CD14-positive monocyte (primary cell): ENCODE measurements at regions of chr4 and their contacts with region 1.

Region 1: DNA sequence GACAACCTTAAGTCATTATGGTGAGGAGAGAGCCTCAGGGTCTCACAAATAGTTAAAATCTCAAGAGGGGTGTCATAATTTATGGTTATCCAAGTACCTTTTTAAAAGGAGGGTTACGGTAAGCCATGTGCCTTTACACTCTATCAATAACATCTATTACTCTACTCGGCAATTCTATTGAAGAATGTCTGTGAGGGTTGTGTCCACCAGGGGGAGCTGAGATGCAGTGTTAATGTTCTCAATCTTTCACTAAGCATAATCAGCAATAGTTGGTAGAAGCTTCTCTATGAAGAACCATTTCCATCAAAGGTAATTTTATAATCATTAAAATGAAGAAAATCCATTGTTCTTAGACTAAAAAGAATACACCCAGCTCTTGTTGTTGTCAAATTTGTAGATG is 457.4 kb downstream of the CENPC start:
- DNase-seq: peak in 2 of 3 donors; percentile 5 to 7
- H3K4me3 ChIP-seq: no peak overlapping the region
- H3K4me3 Mint-ChIP-seq: no peak overlapping the region
- H3K27ac ChIP-seq: no peak overlapping the region
- H3K27ac Mint-ChIP-seq: no peak overlapping the region
- H3K4me1 ChIP-seq: no peaks in the 10 kb centered on the region
- H3K4me1 Mint-ChIP-seq: no peaks in the 10 kb centered on the region
- H3K27me3 ChIP-seq: no peaks in the 10 kb centered on the region
- H3K27me3 Mint-ChIP-seq: peaks cover 0 to 2% (median 2%) of the 10 kb centered on the region in 3 donors
- CTCF ChIP-seq: peak; percentile 71

Region 2: DNA sequence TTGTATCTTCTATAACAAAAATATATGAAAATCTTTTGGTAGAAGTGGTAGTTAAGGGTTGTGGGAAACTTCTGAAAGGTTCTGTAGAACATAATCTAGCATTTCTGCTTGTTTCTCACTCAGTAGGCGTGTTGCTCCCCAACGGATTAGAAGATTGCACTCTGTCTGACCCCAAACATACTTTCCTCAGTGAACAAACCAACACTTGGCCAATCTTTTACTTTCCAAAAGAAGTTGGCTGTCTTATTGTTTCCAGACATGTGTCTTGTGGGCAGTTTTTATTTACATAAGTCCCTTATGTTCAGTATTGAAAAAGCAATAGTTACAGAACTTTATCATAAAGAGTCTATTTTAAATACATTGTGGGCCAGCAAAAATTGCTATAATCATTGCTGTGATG is 1104.8 kb before region 1 on chr4:
- intact Hi-C with region 1: no loop called
- DNase-seq: no peak
- H3K4me3 ChIP-seq: no peak overlapping the region
- H3K4me3 Mint-ChIP-seq: no peak overlapping the region
- H3K27ac ChIP-seq: no peak overlapping the region
- H3K27ac Mint-ChIP-seq: no peak overlapping the region
- H3K4me1 ChIP-seq: no peaks in the 10 kb centered on the region
- H3K4me1 Mint-ChIP-seq: no peaks in the 10 kb centered on the region
- H3K27me3 ChIP-seq: no peaks in the 10 kb centered on the region
- H3K27me3 Mint-ChIP-seq: no peaks in the 10 kb centered on the region
- CTCF ChIP-seq: no peak

Region 3: DNA sequence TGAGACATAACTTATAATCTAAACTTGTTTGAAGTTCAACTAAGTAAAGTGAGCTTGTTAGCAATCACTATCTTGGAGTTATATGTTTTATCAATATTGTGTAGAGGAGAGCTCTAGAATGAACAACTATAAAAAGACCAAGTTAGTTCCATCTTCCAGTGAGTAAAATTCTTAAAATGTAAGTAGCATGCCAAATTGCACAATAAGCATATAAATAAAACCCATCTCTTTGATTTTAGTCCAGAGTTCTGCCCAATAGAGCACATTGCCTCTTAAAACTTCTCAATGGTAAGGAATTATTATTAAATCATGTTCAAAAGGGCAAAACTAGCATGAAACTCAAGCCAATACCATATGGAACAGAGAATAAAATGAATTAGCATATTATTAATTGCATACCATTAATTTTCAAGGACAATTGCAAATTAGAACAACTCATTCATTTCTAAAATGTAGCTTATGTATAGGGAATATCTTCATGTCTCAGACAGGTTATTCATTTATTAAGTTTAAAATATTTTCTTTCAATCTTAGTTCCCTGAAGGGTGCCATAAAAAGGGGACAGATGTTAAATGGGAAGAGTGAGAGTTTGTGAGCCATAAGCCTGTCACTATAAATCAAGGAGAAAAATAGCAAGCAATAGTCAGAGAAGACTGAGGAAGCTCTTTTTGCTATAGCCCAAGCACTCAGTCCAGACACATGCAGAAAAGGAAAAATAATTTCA is 50.2 kb before region 1 on chr4:
- intact Hi-C with region 1: no loop called
- DNase-seq: no peak
- H3K4me3 ChIP-seq: no peak overlapping the region
- H3K4me3 Mint-ChIP-seq: no peak overlapping the region
- H3K27ac ChIP-seq: no peak overlapping the region
- H3K27ac Mint-ChIP-seq: no peak overlapping the region
- H3K4me1 ChIP-seq: no peaks in the 10 kb centered on the region
- H3K4me1 Mint-ChIP-seq: no peaks in the 10 kb centered on the region
- H3K27me3 ChIP-seq: no peaks in the 10 kb centered on the region
- H3K27me3 Mint-ChIP-seq: peaks cover 0 to 2% (median 0%) of the 10 kb centered on the region in 3 donors
- CTCF ChIP-seq: no peak

Region 4: GRCh38 chr4:67131224-67131623 is 43.3 kb after region 1 on chr4:
- intact Hi-C with region 1: no loop called
- DNase-seq: no peak
- H3K4me3 ChIP-seq: no peak overlapping the region
- H3K4me3 Mint-ChIP-seq: no peak overlapping the region
- H3K27ac ChIP-seq: no peak overlapping the region
- H3K27ac Mint-ChIP-seq: no peak overlapping the region
- H3K4me1 ChIP-seq: no peaks in the 10 kb centered on the region
- H3K4me1 Mint-ChIP-seq: no peaks in the 10 kb centered on the region
- H3K27me3 ChIP-seq: no peaks in the 10 kb centered on the region
- H3K27me3 Mint-ChIP-seq: peaks cover 0 to 3% (median 1%) of the 10 kb centered on the region in 3 donors
- CTCF ChIP-seq: no peak

Region 5: GRCh38 chr4:67327262-67328017 is 239.5 kb after region 1 on chr4:
- intact Hi-C with region 1: loop called in 1 of 2 experiments (anchors 5 kb)
- DNase-seq: peak; percentile 6 to 48 (median 35)
- H3K4me3 ChIP-seq: no peak overlapping the region
- H3K4me3 Mint-ChIP-seq: no peak overlapping the region
- H3K27ac ChIP-seq: no peak overlapping the region
- H3K27ac Mint-ChIP-seq: no peak overlapping the region
- H3K4me1 ChIP-seq: no peaks in the 10 kb centered on the region
- H3K4me1 Mint-ChIP-seq: no peaks in the 10 kb centered on the region
- H3K27me3 ChIP-seq: no peaks in the 10 kb centered on the region
- H3K27me3 Mint-ChIP-seq: peaks cover 2 to 12% (median 5%) of the 10 kb centered on the region in 3 donors
- CTCF ChIP-seq: peak; percentile 92